Dorsolateral prefrontal cortex (tissue), 120 donors: ENCODE measurements at regions of chr19 and their contacts with region 1.

Region 1: DNA sequence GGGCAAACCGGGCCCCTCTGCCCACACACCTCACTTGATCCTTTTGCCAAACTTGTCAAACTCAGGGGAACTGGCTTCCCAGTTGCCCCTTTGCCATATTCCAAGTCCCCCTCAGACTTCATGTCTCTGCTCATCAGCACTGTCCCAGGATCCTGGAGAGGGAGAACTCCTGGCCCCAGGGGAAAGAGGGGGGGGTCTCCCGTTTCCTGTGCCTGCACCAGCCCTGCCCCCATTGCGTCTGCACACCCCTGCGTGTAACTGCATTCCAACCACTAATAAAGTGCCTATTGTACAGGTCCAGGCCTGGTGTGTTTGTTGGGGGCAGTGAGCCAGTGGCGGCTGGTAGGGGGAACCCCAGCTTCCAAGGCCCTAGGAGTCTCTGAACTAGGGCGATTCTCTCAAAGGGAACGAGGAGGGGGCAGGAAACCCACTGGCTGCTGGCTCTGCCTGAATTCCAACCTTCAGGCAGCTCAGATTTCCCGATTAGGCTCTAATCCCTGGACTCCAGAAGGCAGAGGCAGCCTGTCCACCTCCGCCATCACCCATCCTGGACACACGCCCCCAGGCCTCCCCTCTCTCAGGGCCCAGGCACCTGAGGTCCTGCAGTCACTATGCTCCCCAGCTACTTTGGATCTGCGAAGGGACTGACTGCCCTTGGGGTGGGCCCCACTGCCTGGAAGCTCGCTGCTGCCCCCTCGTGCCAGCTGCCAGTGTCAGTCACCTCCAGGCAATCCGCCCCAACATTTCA is 9.7 kb upstream of the ILF3 start:
- DNase-seq: peak; percentile 79 to 89 (median 84)
- H3K4me3 ChIP-seq: peak overlapping the region in 1 of 59 donors; percentile 0
- H3K27ac ChIP-seq: peak overlapping the region in 58 of 59 donors; percentile 1 to 85 (median 74)
- H3K27me3 ChIP-seq: no peaks in the 10 kb centered on the region
- CTCF ChIP-seq: peak; percentile 63 to 96 (median 88)

Region 2: DNA sequence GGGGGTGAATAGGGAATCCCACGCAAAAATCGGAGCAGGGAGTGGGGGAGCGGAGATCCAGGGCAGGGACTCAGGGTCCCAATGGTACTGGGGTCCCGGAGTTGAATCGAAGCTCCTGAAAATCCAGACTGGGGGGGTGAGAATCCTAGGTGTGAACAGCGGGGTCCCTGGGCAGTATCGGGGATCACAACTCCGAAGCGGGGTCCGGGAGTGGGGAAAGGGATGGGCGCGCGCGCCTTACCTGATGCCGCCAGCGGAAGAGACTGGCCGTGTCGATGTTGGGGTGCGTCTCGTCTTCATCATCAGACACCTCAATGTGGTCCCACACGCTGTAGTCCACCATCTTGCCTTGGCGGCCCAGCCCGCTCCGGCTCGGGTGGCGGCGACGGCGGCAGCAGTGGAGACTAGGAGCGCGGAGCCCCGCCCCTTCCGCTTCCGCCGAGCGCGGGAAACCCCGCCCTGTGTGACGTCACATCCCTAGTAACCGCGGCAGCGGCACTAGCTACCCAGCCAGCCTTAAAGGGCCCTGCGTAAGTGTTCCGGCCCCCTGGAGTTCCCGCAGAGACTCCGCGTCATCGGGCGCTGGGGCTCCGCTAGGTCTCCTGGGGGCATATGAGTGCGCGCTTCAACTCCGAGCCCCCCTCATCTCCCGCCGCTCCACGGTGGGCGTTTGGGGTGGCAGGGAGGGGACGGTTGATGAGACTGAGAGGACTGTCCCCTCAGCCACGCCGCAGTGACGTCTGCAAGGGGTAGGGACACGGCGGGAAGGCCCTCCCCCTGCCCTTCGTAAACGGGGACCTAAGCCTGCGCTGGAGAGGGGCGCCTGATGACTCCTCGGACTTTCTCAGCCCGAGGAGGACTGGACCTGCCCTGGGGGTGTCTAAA is 241.1 kb before region 1 on chr19 and contains the start of gene CDC37:
- intact Hi-C with region 1: loop called in 1 of 2 experiments (anchors 10 kb)
- DNase-seq: peak; percentile 95 to 100 (median 98)
- H3K4me3 ChIP-seq: peak within 1 kb of the TSS; percentile 64 to 99 (median 91)
- H3K27ac ChIP-seq: peak within 1 kb of the TSS in 51 of 59 donors; percentile 11 to 85 (median 69)
- H3K27me3 ChIP-seq: peaks cover 0 to 6% (median 0%) of the 10 kb centered on the region in 45 donors
- CTCF ChIP-seq: peak in 22 of 56 donors; percentile 6 to 47 (median 23)
- total RNA-seq, gene CDC37: 92.2 to 206 (median 145) TPM

Region 3: GRCh38 chr19:10491472-10492047 is 152.9 kb before region 1 on chr19:
- intact Hi-C with region 1: no loop called
- DNase-seq: no peak
- H3K4me3 ChIP-seq: no peak overlapping the region
- H3K27ac ChIP-seq: no peak overlapping the region
- H3K27me3 ChIP-seq: no peaks in the 10 kb centered on the region
- CTCF ChIP-seq: no peak

Region 4: GRCh38 chr19:10502524-10503001 is 141.9 kb before region 1 on chr19:
- intact Hi-C with region 1: loop called in 1 of 2 experiments (anchors 10 kb)
- DNase-seq: peak; percentile 86 to 94 (median 90)
- H3K4me3 ChIP-seq: peak overlapping the region; percentile 71 to 100 (median 95)
- H3K27ac ChIP-seq: peak overlapping the region; percentile 94 to 100 (median 99)
- H3K27me3 ChIP-seq: no peaks in the 10 kb centered on the region
- CTCF ChIP-seq: peak in 28 of 56 donors; percentile 2 to 46 (median 20)

Region 5: GRCh38 chr19:10580979-10581631 is 63.3 kb before region 1 on chr19:
- intact Hi-C with region 1: loop called (anchors 1 kb)
- DNase-seq: peak; percentile 85 to 96 (median 90)
- H3K4me3 ChIP-seq: peak overlapping the region in 45 of 59 donors; percentile 2 to 55 (median 38)
- H3K27ac ChIP-seq: no peak overlapping the region
- H3K27me3 ChIP-seq: no peaks in the 10 kb centered on the region
- CTCF ChIP-seq: peak; percentile 94 to 100 (median 99)

Region 6: GRCh38 chr19:10828981-10829821 is 184.8 kb after region 1 on chr19:
- intact Hi-C with region 1: no loop called
- DNase-seq: no peak
- H3K4me3 ChIP-seq: no peak overlapping the region
- H3K27ac ChIP-seq: peak overlapping the region in 6 of 59 donors; percentile 6 to 39 (median 18)
- H3K27me3 ChIP-seq: no peaks in the 10 kb centered on the region
- CTCF ChIP-seq: peak in 4 of 56 donors; percentile 11 to 22 (median 17)

Region 7: DNA sequence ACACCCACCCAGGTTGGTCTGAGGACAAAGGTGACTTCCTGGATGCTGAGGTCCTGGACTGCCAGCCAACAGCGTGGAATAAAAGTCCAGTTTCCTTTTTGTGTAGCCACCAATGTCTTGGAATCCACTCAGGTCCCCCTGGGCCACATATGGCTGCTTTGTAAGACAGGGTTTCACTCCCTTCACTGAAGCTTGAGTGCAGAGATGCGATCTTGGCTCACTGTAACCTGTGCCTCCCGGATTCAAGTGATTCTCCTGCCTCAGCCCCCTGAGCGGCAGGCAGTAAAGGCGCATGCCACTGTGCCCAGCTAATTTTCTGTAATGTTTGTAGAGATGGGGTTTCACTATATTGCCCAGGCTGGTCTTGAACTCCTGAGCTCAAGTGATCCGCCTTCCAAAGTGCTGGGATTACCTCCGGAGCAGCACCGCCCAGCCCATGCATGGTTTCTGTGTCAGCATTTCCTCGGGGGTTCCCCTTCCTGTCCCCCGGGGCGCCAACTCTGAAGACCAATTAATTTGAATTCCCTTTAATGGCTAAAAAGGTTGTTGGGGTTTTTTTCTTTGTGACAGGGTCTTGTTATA is 535.4 kb after region 1 on chr19:
- intact Hi-C with region 1: no loop called
- DNase-seq: no peak
- H3K4me3 ChIP-seq: no peak overlapping the region
- H3K27ac ChIP-seq: peak overlapping the region in 2 of 59 donors; percentile 18 to 36
- H3K27me3 ChIP-seq: no peaks in the 10 kb centered on the region
- CTCF ChIP-seq: no peak